Activated T-helper 1 cell treated with anti-CD3 and anti-CD28 coated beads, Interleukin-12 subunit alpha, Interleukin-12 subunit beta, Interleukin-2, Interleukin-4 antibody, amounts not matched to agents 30 ng/mL and 10 ng/mL and 1 ng/mL, durations not matched to agents 14 hours and 24 hours and 36 hours (primary cell): ENCODE measurements at regions of chr16 and their contacts with region 1.

Region 1: GRCh38 chr16:8868416-8869211 is at the start of gene CARHSP1:
- DNase-seq: peak; percentile 79
- H3K4me3 Mint-ChIP-seq: peak within 1 kb of the TSS; percentile 94
- H3K27ac Mint-ChIP-seq: peak within 1 kb of the TSS; percentile 96
- H3K4me1 Mint-ChIP-seq: peaks cover 46% of the 10 kb centered on the region
- H3K27me3 Mint-ChIP-seq: no peaks in the 10 kb centered on the region
- total RNA-seq, gene CARHSP1: 79.4 and 80.5 TPM in 2 replicates

Region 2: GRCh38 chr16:8621572-8622314 is 246.9 kb before region 1 on chr16 and contains the start of gene METTL22:
- intact Hi-C with region 1: loop called (anchors 2 kb)
- DNase-seq: peak; percentile 90
- H3K4me3 Mint-ChIP-seq: peak within 1 kb of the TSS; percentile 99
- H3K27ac Mint-ChIP-seq: peak within 1 kb of the TSS; percentile 87
- H3K4me1 Mint-ChIP-seq: peaks cover 12% of the 10 kb centered on the region
- H3K27me3 Mint-ChIP-seq: peaks cover 8% of the 10 kb centered on the region
- total RNA-seq, gene METTL22: 30.0 and 32.0 TPM in 2 replicates

Region 3: GRCh38 chr16:8674413-8675022 is 194.1 kb before region 1 on chr16 and contains the start of gene ABAT:
- intact Hi-C with region 1: loop called (anchors 1 kb)
- DNase-seq: peak; percentile 91
- H3K4me3 Mint-ChIP-seq: peak within 1 kb of the TSS; percentile 87
- H3K27ac Mint-ChIP-seq: peak within 1 kb of the TSS; percentile 81
- H3K4me1 Mint-ChIP-seq: peaks cover 20% of the 10 kb centered on the region
- H3K27me3 Mint-ChIP-seq: peaks cover 6% of the 10 kb centered on the region
- total RNA-seq, gene ABAT: 7.3 and 7.7 TPM in 2 replicates

Region 4: DNA sequence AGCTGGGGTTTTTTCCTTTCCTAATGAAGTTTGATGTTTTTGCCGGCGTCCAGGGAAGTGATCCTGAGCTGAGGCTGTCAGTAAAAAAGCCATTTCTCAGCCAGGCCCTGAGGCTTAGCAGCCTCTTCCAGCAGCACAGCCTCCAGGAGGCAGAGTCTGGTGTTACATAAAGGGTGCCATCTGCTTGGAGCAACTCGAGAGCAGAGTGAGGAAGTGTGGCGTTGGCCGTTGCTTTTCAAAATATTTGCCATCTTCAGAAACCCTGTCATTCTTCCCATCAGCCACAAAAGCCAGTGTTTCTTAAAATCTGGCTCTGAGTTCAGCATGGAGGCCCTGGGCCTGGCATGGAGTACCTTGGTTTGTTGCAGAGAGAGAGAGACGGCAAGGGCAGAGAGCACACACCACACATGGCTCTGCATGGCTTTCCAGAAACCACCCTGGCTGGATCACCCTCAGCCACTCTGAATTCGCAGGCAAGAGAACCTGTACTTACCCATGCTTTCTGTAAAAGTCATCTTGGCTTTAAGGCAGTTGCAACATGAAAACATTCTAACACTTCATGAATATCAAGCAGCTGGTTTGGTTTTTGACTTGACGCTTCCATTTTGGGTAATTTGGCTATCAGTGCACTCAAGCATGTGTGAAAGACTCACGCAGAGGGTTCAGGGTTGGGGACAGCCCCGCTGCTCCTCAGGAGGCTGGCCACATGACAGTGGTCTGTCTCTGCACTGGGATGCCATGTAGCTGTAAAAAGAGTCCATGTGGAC is 49.9 kb before region 1 on chr16:
- intact Hi-C with region 1: loop called (anchors 5 kb)
- DNase-seq: no peak
- H3K4me3 Mint-ChIP-seq: no peak overlapping the region
- H3K27ac Mint-ChIP-seq: peak overlapping the region; percentile 70
- H3K4me1 Mint-ChIP-seq: peaks cover 44% of the 10 kb centered on the region
- H3K27me3 Mint-ChIP-seq: no peaks in the 10 kb centered on the region

Region 5: DNA sequence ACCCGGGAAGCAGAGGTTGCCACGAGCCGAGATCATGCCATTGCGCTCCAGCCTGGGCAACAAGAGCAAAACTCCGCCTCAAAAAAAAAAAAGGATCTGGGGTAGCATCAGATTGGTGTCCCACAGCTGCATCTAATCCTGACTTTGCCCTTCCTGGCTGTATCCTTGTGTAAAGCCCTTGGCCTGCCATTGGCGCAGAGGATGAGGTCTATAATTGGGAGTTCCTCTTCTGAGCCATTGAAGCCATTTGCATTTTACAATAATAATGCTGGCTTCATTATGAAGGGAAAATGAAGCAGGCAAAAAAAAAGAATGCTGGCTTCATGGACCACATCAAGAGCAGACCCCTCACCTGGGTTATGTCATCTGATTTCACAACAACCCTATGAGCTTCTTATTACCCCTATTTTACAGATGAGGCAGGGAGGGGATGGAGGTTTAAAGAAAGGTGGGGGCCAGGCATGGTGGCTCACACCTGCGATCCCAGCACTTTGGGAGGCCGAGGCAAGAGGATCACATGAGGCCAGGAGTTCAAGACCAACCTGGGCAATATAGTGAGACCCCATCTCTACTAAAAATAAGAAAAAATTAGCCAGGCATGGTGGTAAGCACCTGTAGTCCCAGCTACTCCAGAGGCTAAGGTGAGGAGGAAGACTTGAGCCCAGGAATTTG is 12.4 kb after region 1 on chr16:
- intact Hi-C with region 1: loop called (anchors 1 kb)
- DNase-seq: no peak
- H3K4me3 Mint-ChIP-seq: no peak overlapping the region
- H3K27ac Mint-ChIP-seq: no peak overlapping the region
- H3K4me1 Mint-ChIP-seq: no peaks in the 10 kb centered on the region
- H3K27me3 Mint-ChIP-seq: peaks cover 2% of the 10 kb centered on the region

Region 6: DNA sequence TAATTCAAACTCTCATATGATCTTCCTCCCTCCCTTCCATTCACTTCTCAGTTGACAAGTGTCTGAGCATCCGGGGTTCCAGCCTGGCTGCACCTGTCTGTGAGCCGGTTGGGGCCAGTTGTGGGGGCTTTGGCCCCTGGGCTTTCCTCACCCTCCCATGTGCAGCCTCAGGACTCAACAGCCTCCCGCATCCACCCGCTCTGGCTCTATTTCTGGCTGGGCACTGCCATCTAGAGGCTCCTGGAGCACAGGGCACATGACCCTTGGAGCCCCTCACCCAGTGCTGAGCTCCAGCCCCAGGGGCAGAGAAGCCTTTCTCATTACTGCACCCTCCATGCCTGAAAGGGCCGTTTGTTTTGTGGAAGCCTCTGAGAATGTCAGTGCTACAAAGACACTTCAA is 266.1 kb after region 1 on chr16:
- intact Hi-C with region 1: loop called (anchors 5 kb)
- DNase-seq: peak; percentile 40
- H3K4me3 Mint-ChIP-seq: no peak overlapping the region
- H3K27ac Mint-ChIP-seq: peak overlapping the region; percentile 69
- H3K4me1 Mint-ChIP-seq: peaks cover 22% of the 10 kb centered on the region
- H3K27me3 Mint-ChIP-seq: peaks cover 6% of the 10 kb centered on the region

Region 7: GRCh38 chr16:10743610-10744393 is 1875.2 kb after region 1 on chr16 and contains the start of gene NUBP1:
- intact Hi-C with region 1: loop called (anchors 10 kb)
- DNase-seq: peak; percentile 97
- H3K4me3 Mint-ChIP-seq: peak within 1 kb of the TSS; percentile 87
- H3K27ac Mint-ChIP-seq: peak within 1 kb of the TSS; percentile 93
- H3K4me1 Mint-ChIP-seq: peaks cover 57% of the 10 kb centered on the region
- H3K27me3 Mint-ChIP-seq: no peaks in the 10 kb centered on the region
- total RNA-seq, gene NUBP1: 39.8 and 42.4 TPM in 2 replicates